ENCODE measurements at regions of chr2 and their contacts with region 1.

Region 1: GRCh38 chr2:232521959-232522622 is 1.9 kb downstream of the PRSS56 start:
- DNase-seq: peak; percentile 63
- ATAC-seq: peak; percentile 45 to 57

Region 2: DNA sequence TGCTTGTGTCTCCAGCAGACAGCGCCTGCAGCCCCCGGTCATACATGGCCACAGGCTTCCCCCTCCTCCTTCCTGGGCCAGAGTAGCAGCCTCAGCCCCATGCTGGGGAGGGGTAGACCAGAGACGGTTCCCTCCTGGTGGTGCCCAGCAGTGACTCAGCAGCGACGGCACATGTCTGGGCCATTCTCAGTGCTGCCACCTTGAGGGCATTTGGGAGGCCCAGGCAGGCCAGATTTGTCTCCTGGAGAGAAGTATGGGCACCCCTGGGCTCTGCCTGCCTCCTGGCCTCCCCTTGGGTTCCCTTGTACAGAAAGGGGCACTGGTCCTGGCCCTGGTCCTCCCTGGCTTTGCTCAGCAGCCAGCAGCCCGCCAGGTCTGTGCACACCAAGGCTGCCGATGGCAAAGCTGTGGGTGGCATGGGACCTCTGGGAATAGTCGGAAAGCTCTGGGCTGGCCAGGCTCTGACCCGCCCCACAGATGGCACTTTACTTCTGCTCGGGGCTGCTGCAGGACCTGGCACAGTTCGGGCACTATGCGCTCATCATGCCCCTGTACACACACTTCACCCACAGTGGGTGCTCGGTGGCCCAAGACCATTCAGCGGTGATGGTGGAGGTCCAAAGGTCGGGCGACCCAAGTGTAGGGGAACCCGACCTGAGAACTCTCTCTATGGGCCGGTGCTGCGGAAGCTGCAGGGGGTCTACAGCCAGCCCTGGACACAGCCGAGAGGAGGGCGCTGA is 77.5 kb before region 1 on chr2:
- intact Hi-C with region 1: loop called in 1 of 2 experiments (anchors 5 kb)
- DNase-seq: peak; percentile 52
- ATAC-seq: peak in 1 of 2 donors; percentile 8

Region 3: GRCh38 chr2:232449964-232450363 is 72.1 kb before region 1 on chr2:
- intact Hi-C with region 1: loop called (anchors 5 kb)
- DNase-seq: no peak
- ATAC-seq: no peak

Region 4: DNA sequence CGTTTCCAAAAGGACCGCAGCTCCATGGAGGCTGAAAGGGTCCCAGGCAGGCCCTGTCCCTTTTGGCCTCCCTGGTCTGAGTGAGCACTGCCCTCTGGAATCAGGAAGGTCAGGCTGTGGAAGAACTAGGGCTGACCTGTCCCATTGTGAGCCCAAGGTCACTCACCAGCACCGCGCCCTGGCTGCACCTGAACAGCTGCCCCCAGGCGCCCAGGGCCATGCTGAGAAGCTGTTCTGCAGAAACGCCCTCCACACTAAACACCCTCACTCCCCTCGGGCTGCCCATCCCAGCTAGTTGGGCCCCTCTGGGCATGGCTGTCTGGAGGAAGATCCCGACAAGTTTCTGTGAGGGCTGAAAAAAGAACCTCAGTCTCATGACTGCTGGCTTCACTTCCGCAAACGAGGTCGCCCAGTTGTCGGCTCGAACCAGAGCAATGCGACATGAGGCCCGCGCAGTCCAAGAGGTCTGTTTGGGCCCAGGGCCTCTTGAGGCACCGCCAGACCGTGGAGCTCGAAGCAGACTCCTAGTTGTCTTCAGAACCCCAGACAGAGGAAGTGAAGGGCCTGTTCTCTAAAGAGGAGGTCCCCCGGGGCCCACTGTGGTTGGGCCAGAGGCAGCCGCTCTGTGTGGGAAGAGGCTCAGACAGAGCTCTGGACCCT is 602.5 kb after region 1 on chr2:
- intact Hi-C with region 1: no loop called
- DNase-seq: no peak
- ATAC-seq: no peak

Measured in left cardiac atrium (tissue), 4 donors.